Transverse colon (tissue), 4 donors: ENCODE measurements at regions of chr2 and their contacts with region 1.

Region 1: GRCh38 chr2:68336192-68336591 is 16.4 kb upstream of the CNRIP1 start:
- DNase-seq: no peak
- H3K4me3 ChIP-seq: no peak overlapping the region
- H3K27ac ChIP-seq: no peak overlapping the region
- H3K4me1 ChIP-seq: no peaks in the 10 kb centered on the region
- H3K27me3 ChIP-seq: peaks cover 3% of the 10 kb centered on the region
- CTCF ChIP-seq: no peak
- EP300 ChIP-seq: no peak
- POLR2A ChIP-seq: no peak

Region 2: DNA sequence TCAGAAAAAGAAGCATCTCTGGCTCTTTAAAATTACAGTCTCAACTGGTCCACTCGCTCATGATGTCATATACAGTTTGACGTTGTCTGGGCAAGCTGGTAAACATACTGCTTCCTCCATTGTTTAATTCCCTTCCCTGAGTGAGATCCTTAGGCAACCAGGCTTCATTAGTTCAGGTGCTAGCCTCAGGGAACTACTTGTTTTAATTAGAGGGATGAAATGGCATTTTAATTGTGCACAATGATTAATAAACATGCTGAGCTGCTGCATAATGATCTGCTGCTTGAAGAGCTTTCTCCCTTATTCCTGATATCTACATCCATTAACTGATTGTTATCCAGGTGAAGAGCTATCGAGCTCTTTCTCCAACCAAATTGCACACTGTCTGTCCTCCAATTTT is 1134.7 kb before region 1 on chr2:
- in situ Hi-C with region 1: no loop called
- intact Hi-C with region 1: loop called (anchors 5 kb)
- DNase-seq: no peak
- H3K4me3 ChIP-seq: no peak overlapping the region
- H3K27ac ChIP-seq: no peak overlapping the region
- H3K4me1 ChIP-seq: no peaks in the 10 kb centered on the region
- H3K27me3 ChIP-seq: no peaks in the 10 kb centered on the region
- CTCF ChIP-seq: no peak
- EP300 ChIP-seq: no peak
- POLR2A ChIP-seq: no peak

Region 3: DNA sequence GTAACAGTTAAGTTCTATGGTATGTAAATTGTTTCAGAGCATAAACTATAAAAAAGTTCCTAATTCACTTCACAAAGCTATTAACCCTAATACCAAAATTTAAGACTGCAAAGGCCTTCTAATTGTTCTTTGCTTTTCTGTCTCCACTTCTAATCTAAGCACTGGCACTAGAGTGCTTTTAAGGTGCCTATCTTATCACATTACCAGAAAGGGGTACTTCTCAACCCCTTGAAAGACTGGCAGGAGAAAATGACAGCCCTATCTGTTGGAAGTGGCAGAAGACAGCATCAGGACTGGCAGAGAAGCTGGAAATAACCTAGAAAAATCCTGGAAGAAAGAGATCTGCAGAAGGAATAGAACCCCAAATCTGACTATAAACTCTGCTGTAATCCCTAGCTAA is 26.8 kb before region 1 on chr2:
- in situ Hi-C with region 1: no loop called
- intact Hi-C with region 1: no loop called
- DNase-seq: no peak
- H3K4me3 ChIP-seq: no peak overlapping the region
- H3K27ac ChIP-seq: no peak overlapping the region
- H3K4me1 ChIP-seq: no peaks in the 10 kb centered on the region
- H3K27me3 ChIP-seq: no peaks in the 10 kb centered on the region
- CTCF ChIP-seq: no peak
- EP300 ChIP-seq: no peak
- POLR2A ChIP-seq: no peak